K562 (cell line): ENCODE measurements at regions of chr15 and their contacts with region 1.

Region 1: DNA sequence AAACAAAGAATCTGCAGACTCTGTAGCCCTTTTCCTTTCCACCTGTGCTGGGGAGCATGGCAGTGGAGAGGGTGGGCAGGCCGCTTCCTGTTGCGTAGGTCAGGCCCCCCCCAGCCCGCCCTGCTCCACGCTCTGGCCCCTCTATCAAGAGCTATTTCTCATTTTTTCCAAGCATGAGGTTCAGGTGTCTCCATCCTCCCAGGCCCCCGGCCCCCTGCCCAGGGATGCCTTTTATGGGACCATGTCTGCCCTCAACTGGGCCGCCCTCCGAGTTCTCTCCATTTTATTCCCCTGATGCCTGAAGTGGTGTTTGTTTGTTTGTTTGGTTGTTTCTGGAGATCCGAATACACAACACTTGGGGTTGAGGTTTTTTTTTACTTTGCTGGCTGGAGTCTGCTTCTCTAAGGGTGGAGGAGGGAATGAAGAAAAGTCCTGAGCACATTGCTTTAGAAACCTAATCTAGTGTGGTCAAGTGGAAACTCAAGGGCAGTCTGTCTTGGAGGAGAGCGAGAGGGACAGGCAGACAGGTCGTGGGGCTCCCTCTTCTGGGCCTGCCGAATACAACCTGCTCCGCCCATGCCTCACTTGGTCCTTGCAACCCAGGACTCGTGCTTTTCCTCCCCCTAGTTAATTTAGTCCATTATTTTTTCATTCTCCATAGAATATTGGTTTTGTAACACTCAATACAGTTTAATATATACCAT is 176.5 kb upstream of the LYSMD4 start:
- DNase-seq: peak; percentile 20 to 29 (median 24)
- ATAC-seq: peak; percentile 92
- H3K4me3 ChIP-seq: no peak overlapping the region
- H3K27ac ChIP-seq: no peak overlapping the region
- H3K4me1 ChIP-seq: no peaks in the 10 kb centered on the region
- H3K27me3 ChIP-seq: peaks cover 0 to 12% of the 10 kb centered on the region in 2 experiments; a peak in 3 of 5 replicates
- CTCF ChIP-seq: peak; percentile 49 to 52 (median 49); a peak in 5 of 6 replicates
- EP300 ChIP-seq: no peak
- POLR2A ChIP-seq: no peak
- RAD21 ChIP-seq: peak; percentile 10 to 65; a peak in 2 of 4 replicates

Region 2: GRCh38 chr15:99409097-99409473 is 500.7 kb before region 1 on chr15:
- CTCF ChIA-PET with region 1: no interaction called
- POLR2A ChIA-PET with region 1: no interaction called
- in situ Hi-C with region 1: no loop called
- intact Hi-C with region 1: loop called (anchors 10 kb)
- DNase-seq: no peak
- ATAC-seq: no peak
- H3K4me3 ChIP-seq: no peak overlapping the region
- H3K27ac ChIP-seq: no peak overlapping the region
- H3K4me1 ChIP-seq: no peaks in the 10 kb centered on the region; a peak in 2 of 5 replicates
- H3K27me3 ChIP-seq: peaks cover 10 to 70% of the 10 kb centered on the region in 2 experiments; a peak in 4 of 5 replicates
- CTCF ChIP-seq: peak in 1 of 3 experiments; percentile 23; a peak in 2 of 6 replicates
- EP300 ChIP-seq: no peak
- POLR2A ChIP-seq: no peak
- RAD21 ChIP-seq: peak; percentile 17 to 52; a peak in 3 of 4 replicates

Region 3: DNA sequence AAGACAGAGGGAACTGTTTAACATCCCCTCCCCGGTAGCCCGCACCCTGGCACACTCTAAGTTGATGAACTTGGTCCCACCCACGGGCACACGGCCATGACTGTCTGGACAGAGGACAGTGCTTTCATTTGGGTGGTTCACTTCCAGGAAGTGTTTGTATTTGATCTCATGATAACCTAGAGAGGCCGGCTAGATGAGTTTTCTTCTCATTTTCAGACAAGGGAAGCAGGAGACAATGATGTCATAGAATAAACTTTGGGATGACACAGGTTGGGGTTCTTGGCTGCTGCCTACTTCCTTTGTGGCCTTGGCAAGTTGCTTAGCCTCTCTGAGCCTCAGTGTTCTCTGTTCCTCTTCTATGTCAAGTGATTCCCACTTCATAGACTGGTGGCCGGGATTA is 160.4 kb before region 1 on chr15:
- CTCF ChIA-PET with region 1: no interaction called
- POLR2A ChIA-PET with region 1: no interaction called
- in situ Hi-C with region 1: no loop called
- intact Hi-C with region 1: no loop called
- DNase-seq: no peak
- ATAC-seq: no peak
- H3K4me3 ChIP-seq: no peak overlapping the region
- H3K27ac ChIP-seq: no peak overlapping the region
- H3K4me1 ChIP-seq: peaks cover 0 to 3% of the 10 kb centered on the region in 2 experiments; a peak in 3 of 5 replicates
- H3K27me3 ChIP-seq: peaks cover 5 to 36% of the 10 kb centered on the region in 2 experiments; a peak in 4 of 5 replicates
- CTCF ChIP-seq: no peak
- EP300 ChIP-seq: no peak
- POLR2A ChIP-seq: no peak
- RAD21 ChIP-seq: no peak

Region 4: DNA sequence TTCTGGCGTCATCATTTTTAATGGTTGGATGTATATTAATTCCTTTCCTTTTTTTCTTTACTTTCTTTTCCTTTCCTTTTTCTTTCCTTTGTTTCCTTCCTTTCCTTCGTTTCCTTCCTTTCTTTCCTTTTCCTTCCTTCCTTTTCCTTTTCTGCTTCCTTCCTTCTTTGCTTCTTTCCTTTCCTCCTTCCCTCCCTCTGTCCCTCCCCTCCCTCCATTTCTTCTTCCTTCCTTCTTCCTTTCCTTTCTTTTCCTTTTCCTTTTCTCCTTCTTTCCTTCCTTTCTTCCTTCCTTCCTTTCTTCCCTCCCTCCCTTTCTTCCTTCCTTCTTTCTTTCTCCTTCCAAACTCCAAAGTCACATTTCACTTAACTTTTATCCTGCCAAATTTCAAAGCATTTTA is 121.6 kb before region 1 on chr15:
- CTCF ChIA-PET with region 1: interaction called, 4 read pairs
- POLR2A ChIA-PET with region 1: no interaction called
- in situ Hi-C with region 1: no loop called
- intact Hi-C with region 1: loop called (anchors 1 kb)
- DNase-seq: no peak
- ATAC-seq: no peak
- H3K4me3 ChIP-seq: no peak overlapping the region
- H3K27ac ChIP-seq: no peak overlapping the region
- H3K4me1 ChIP-seq: no peaks in the 10 kb centered on the region
- H3K27me3 ChIP-seq: no peaks in the 10 kb centered on the region; a peak in 1 of 5 replicates
- CTCF ChIP-seq: no peak
- EP300 ChIP-seq: no peak
- POLR2A ChIP-seq: no peak
- RAD21 ChIP-seq: no peak